ENCODE measurements at regions of chr17 and their contacts with region 1.

Region 1: GRCh38 chr17:78013683-78014467 is 55.4 kb downstream of the TNRC6C start:
- DNase-seq: peak in 13 of 14 experiments; percentile 6 to 84 (median 42)
- ATAC-seq: peak; percentile 75
- H3K4me3 ChIP-seq: no peak overlapping the region
- H3K4me3 Mint-ChIP-seq: no peak overlapping the region
- H3K27ac ChIP-seq: no peak overlapping the region
- H3K27ac Mint-ChIP-seq: peak overlapping the region; percentile 34
- H3K4me1 ChIP-seq: peaks cover 4% of the 10 kb centered on the region
- H3K4me1 Mint-ChIP-seq: peaks cover 47% of the 10 kb centered on the region
- H3K27me3 ChIP-seq: no peaks in the 10 kb centered on the region
- H3K27me3 Mint-ChIP-seq: no peaks in the 10 kb centered on the region
- CTCF ChIP-seq: peak; percentile 88

Region 2: GRCh38 chr17:77319211-77320043 is 694.4 kb before region 1 on chr17:
- CTCF ChIA-PET with region 1: no interaction called
- POLR2A ChIA-PET with region 1: no interaction called
- intact Hi-C with region 1: loop called in 1 of 2 experiments (anchors 10 kb)
- DNase-seq: peak in 11 of 14 experiments; percentile 26 to 87 (median 53)
- ATAC-seq: peak; percentile 84
- H3K4me3 ChIP-seq: peak overlapping the region; percentile 36
- H3K4me3 Mint-ChIP-seq: peak overlapping the region; percentile 68
- H3K27ac ChIP-seq: peak overlapping the region; percentile 11 to 21
- H3K27ac Mint-ChIP-seq: peak overlapping the region; percentile 37
- H3K4me1 ChIP-seq: peaks cover 46% of the 10 kb centered on the region
- H3K4me1 Mint-ChIP-seq: peaks cover 28% of the 10 kb centered on the region
- H3K27me3 ChIP-seq: no peaks in the 10 kb centered on the region
- H3K27me3 Mint-ChIP-seq: no peaks in the 10 kb centered on the region
- CTCF ChIP-seq: no peak

Region 3: DNA sequence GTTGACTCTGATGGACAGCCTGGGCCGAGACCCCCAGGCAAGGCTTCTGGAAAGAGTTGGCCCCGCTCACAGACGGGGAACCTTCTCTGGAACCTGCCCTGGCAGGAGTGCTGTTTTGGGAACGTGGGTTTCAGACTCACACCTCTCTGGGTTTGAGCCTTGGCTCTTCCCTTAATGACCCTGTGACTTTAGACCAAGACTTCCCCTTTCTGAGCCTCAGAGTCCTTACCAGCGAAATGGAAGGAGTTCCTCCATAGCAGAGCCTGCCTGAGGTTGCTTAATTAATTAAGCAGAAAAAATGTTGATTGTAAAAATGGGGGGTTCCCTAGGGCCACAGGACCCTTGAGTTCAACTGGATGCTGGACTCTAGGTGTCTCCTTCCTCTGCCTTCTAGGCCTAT is 464.9 kb before region 1 on chr17:
- CTCF ChIA-PET with region 1: no interaction called
- POLR2A ChIA-PET with region 1: no interaction called
- intact Hi-C with region 1: no loop called
- DNase-seq: no peak
- ATAC-seq: no peak
- H3K4me3 ChIP-seq: no peak overlapping the region
- H3K4me3 Mint-ChIP-seq: no peak overlapping the region
- H3K27ac ChIP-seq: no peak overlapping the region
- H3K27ac Mint-ChIP-seq: no peak overlapping the region
- H3K4me1 ChIP-seq: no peaks in the 10 kb centered on the region
- H3K4me1 Mint-ChIP-seq: no peaks in the 10 kb centered on the region
- H3K27me3 ChIP-seq: no peaks in the 10 kb centered on the region
- H3K27me3 Mint-ChIP-seq: no peaks in the 10 kb centered on the region
- CTCF ChIP-seq: no peak

Region 4: DNA sequence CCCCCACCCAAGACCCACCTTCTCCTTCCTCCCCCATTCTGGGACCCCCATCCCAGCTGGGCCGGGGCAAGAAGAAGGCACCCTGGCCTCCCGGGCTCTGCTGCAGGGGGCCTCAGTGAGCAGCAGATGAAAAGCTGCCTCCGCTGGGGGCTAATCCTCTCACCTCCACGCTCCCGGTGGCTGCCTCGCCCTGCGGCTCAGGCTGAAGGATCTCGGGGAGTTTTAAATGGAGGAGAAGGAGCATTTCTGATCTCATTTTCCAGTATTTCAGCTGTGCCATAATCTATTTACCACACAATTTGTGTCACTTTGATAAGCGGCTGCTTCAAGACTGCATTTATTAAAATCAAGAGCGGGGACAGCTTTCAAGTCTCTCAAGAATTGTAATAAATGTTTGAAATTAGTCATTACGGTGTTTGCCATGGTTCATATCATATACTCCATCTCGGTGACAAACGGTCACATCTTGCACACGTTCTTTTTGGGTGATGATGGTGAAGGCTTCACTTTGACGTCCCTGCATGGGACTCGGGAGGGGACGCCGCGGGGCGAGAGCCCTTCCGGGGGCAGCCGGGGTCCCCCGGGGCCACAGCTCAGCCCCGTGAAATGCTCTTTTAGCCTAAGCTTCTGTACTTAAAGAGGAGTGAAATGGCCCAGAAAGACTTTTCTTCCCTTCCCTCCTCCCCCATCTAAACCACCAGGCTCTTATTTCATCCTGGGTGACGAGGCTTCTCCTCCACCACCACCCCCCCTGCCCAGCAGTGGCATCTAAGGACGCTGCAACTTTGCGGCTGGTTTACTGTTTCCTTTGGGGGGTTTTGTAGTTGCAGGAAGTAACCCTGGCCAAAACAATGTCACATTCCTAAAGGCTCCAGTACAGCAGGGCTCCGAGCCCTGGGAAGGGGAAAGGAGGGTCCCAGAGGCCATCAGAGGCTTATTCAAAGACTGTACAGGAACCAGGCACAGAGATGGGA is 368.5 kb before region 1 on chr17:
- CTCF ChIA-PET with region 1: interaction called, 13 read pairs
- POLR2A ChIA-PET with region 1: interaction called, 5 read pairs
- intact Hi-C with region 1: loop called (anchors 5 kb)
- DNase-seq: peak; percentile 25 to 75 (median 52)
- ATAC-seq: peak; percentile 88
- H3K4me3 ChIP-seq: peak overlapping the region; percentile 49
- H3K4me3 Mint-ChIP-seq: peak overlapping the region; percentile 68
- H3K27ac ChIP-seq: no peak overlapping the region
- H3K27ac Mint-ChIP-seq: peak overlapping the region; percentile 77
- H3K4me1 ChIP-seq: peaks cover 25% of the 10 kb centered on the region
- H3K4me1 Mint-ChIP-seq: peaks cover 20% of the 10 kb centered on the region
- H3K27me3 ChIP-seq: no peaks in the 10 kb centered on the region
- H3K27me3 Mint-ChIP-seq: no peaks in the 10 kb centered on the region
- CTCF ChIP-seq: peak; percentile 57

Region 5: GRCh38 chr17:77881545-77881944 is 132.3 kb before region 1 on chr17:
- CTCF ChIA-PET with region 1: no interaction called
- POLR2A ChIA-PET with region 1: interaction called, 4 read pairs
- intact Hi-C with region 1: loop called in 1 of 2 experiments (anchors 10 kb)
- DNase-seq: peak; percentile 44 to 91 (median 66)
- ATAC-seq: peak; percentile 14
- H3K4me3 ChIP-seq: peak overlapping the region; percentile 50
- H3K4me3 Mint-ChIP-seq: peak overlapping the region; percentile 87
- H3K27ac ChIP-seq: peak overlapping the region; percentile 93 to 99
- H3K27ac Mint-ChIP-seq: peak overlapping the region; percentile 97
- H3K4me1 ChIP-seq: peaks cover 91% of the 10 kb centered on the region
- H3K4me1 Mint-ChIP-seq: peaks cover 87% of the 10 kb centered on the region
- H3K27me3 ChIP-seq: no peaks in the 10 kb centered on the region
- H3K27me3 Mint-ChIP-seq: no peaks in the 10 kb centered on the region
- CTCF ChIP-seq: no peak

Region 6: DNA sequence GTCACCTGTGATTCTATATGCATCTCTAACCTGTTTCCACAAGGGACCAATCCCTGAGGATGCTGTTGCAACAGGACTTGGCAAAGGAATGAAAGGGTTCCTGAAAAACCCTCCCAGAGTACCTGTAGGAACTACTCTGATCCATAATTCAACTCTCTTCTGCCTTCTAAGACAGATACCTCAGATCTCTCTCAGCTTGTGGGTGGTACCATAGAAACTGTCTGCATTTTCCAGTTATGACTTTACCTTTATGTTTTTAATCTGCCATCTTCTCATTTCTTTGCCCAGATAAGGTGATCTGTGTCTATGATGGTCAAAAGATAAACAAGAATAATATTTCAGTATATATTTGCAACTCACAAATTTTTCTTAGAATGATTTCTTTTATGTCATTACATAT is 49.6 kb after region 1 on chr17:
- CTCF ChIA-PET with region 1: no interaction called
- POLR2A ChIA-PET with region 1: no interaction called
- intact Hi-C with region 1: no loop called
- DNase-seq: no peak
- ATAC-seq: no peak
- H3K4me3 ChIP-seq: no peak overlapping the region
- H3K4me3 Mint-ChIP-seq: no peak overlapping the region
- H3K27ac ChIP-seq: no peak overlapping the region
- H3K27ac Mint-ChIP-seq: peak overlapping the region; percentile 16
- H3K4me1 ChIP-seq: no peaks in the 10 kb centered on the region
- H3K4me1 Mint-ChIP-seq: peaks cover 31% of the 10 kb centered on the region
- H3K27me3 ChIP-seq: no peaks in the 10 kb centered on the region
- H3K27me3 Mint-ChIP-seq: no peaks in the 10 kb centered on the region
- CTCF ChIP-seq: no peak

Region 7: DNA sequence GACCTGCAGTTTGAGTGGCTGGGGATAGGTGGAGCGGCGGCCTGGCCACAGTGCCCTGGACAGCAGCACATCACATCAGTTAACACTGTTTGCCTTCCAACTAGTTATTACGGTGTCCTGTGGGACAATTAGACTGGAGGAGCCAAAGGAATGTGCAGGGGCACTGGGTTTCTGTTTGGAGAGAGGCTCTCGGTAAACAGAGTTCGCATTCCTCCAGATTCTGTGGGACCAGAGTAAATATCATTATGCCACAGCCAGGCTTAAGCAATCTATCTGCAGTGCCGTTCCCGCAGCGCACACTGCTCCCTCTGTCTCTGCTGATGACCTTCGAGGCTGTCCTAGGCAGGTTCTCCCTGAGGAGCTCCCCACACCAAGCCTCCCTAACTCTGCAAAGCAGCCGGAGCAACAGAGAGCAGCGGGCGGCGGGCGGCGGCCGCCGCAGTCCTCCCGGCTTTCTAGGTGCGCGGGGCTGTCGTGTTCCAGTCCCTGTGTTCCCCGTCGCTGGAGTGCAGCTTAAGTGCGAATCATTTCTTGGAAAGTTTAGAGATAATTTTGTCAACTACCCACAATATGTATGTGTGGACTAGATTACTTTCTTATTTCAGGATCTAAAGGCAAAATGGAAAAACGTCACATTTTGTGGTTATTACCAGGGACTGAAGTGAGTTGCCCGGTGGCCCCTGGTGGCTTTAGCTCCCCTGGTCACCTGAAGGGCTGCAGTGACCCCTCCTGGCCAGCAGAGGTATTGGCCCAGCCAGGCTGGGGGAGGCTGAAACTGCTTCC is 407.8 kb after region 1 on chr17:
- CTCF ChIA-PET with region 1: no interaction called
- POLR2A ChIA-PET with region 1: no interaction called
- intact Hi-C with region 1: loop called in 1 of 2 experiments (anchors 10 kb)
- DNase-seq: peak; percentile 56 to 85 (median 72)
- ATAC-seq: peak; percentile 97
- H3K4me3 ChIP-seq: no peak overlapping the region
- H3K4me3 Mint-ChIP-seq: no peak overlapping the region
- H3K27ac ChIP-seq: no peak overlapping the region
- H3K27ac Mint-ChIP-seq: peak overlapping the region; percentile 37
- H3K4me1 ChIP-seq: peaks cover 18% of the 10 kb centered on the region
- H3K4me1 Mint-ChIP-seq: peaks cover 31% of the 10 kb centered on the region
- H3K27me3 ChIP-seq: no peaks in the 10 kb centered on the region
- H3K27me3 Mint-ChIP-seq: no peaks in the 10 kb centered on the region
- CTCF ChIP-seq: peak; percentile 98

Measured in CD4-positive, alpha-beta T cell (primary cell).